Transverse colon (tissue), 4 donors: ENCODE measurements at regions of chr10 and their contacts with region 1.

Region 1: GRCh38 chr10:129096065-129096984 is 370.7 kb upstream of the MGMT start:
- DNase-seq: no peak
- H3K4me3 ChIP-seq: no peak overlapping the region
- H3K27ac ChIP-seq: peak overlapping the region; percentile 37 to 71 (median 51)
- H3K4me1 ChIP-seq: no peaks in the 10 kb centered on the region
- H3K27me3 ChIP-seq: no peaks in the 10 kb centered on the region
- CTCF ChIP-seq: no peak
- EP300 ChIP-seq: no peak
- POLR2A ChIP-seq: no peak

Region 2: GRCh38 chr10:129078346-129078745 is 18.0 kb before region 1 on chr10:
- in situ Hi-C with region 1: no loop called
- intact Hi-C with region 1: loop called (anchors 1 kb)
- DNase-seq: no peak
- H3K4me3 ChIP-seq: no peak overlapping the region
- H3K27ac ChIP-seq: no peak overlapping the region
- H3K4me1 ChIP-seq: peaks cover 0 to 3% (median 0%) of the 10 kb centered on the region in 4 donors
- H3K27me3 ChIP-seq: no peaks in the 10 kb centered on the region
- CTCF ChIP-seq: no peak
- EP300 ChIP-seq: no peak
- POLR2A ChIP-seq: no peak